ENCODE measurements at regions of chr17 and their contacts with region 1.

Region 1: GRCh38 chr17:55356434-55357328 is 65.0 kb downstream of the MMD start:
- DNase-seq: no peak
- H3K4me3 ChIP-seq: no peak overlapping the region
- H3K27ac ChIP-seq: no peak overlapping the region
- H3K4me1 ChIP-seq: no peaks in the 10 kb centered on the region
- H3K27me3 ChIP-seq: no peaks in the 10 kb centered on the region
- CTCF ChIP-seq: peak; percentile 64 to 83 (median 66)
- EP300 ChIP-seq: no peak
- POLR2A ChIP-seq: no peak

Region 2: DNA sequence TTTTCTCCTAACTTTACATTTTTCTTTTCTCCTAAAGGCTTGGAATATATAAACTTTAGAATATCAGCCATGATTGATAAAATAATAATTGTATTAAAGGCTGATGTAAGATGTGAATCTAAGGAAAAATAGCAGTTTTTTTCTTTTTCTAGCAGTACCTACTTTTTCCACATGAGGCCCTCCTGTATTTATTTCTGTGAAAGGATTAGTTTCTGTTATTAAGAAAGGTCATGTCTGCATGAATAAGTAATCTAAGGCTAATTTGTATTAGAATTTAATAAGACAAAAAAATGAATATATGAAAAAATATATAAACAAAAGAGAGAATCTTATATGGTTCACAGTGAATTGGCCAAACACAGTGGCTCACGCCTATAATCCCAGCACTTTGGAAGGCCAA is 302.8 kb before region 1 on chr17:
- intact Hi-C with region 1: loop called (anchors 10 kb)
- DNase-seq: no peak
- H3K4me3 ChIP-seq: no peak overlapping the region
- H3K27ac ChIP-seq: no peak overlapping the region
- H3K4me1 ChIP-seq: no peaks in the 10 kb centered on the region
- H3K27me3 ChIP-seq: no peaks in the 10 kb centered on the region
- CTCF ChIP-seq: peak; percentile 30 to 52 (median 31)
- EP300 ChIP-seq: no peak
- POLR2A ChIP-seq: no peak

Region 3: GRCh38 chr17:55410722-55411462 is 54.2 kb after region 1 on chr17:
- intact Hi-C with region 1: no loop called
- DNase-seq: no peak
- H3K4me3 ChIP-seq: no peak overlapping the region
- H3K27ac ChIP-seq: peak overlapping the region; percentile 7 to 27 (median 19)
- H3K4me1 ChIP-seq: peaks cover 8 to 21% (median 15%) of the 10 kb centered on the region in 4 donors
- H3K27me3 ChIP-seq: no peaks in the 10 kb centered on the region
- CTCF ChIP-seq: no peak
- EP300 ChIP-seq: no peak
- POLR2A ChIP-seq: no peak

Measured in esophagus muscularis mucosa (tissue), 4 donors.